T-cell (primary cell): ENCODE measurements at regions of chr22 and their contacts with region 1.

Region 1: GRCh38 chr22:31661851-31662656 is at the start of gene PISD:
- DNase-seq: peak; percentile 92 to 98 (median 96)
- ATAC-seq: peak; percentile 93 to 97 (median 96)
- H3K4me3 ChIP-seq: peak within 1 kb of the TSS; percentile 86 to 99
- H3K4me3 Mint-ChIP-seq: peak within 1 kb of the TSS; percentile 90 to 99 (median 97)
- H3K27ac ChIP-seq: peak within 1 kb of the TSS; percentile 60
- H3K27ac Mint-ChIP-seq: peak within 1 kb of the TSS; percentile 92 to 95
- H3K4me1 ChIP-seq: peaks cover 11 to 28% of the 10 kb centered on the region in 2 experiments
- H3K4me1 Mint-ChIP-seq: peaks cover 37 to 44% (median 38%) of the 10 kb centered on the region in 3 donors
- H3K27me3 ChIP-seq: no peaks in the 10 kb centered on the region
- H3K27me3 Mint-ChIP-seq: no peaks in the 10 kb centered on the region
- total RNA-seq, gene PISD: 35.0 to 44.2 (median 39.3) TPM

Region 2: DNA sequence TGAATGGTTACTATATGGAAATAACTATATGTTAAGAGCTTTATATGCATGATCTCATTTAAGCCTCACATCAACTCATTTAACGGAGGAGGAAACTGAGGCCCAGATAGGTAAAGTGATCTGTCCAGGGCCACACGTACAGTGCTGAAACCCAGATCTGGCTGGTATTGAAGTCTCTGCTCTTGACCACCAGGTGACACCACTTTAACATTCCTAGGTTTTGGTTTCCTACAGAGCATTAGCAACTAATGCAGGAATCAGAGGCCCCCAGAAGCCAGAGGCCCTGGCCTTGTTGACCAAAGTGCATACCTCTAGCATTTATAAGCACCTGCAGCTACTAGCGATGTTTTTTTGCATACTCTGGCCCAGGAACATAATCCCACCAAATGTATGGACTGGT is 462.9 kb before region 1 on chr22:
- CTCF ChIA-PET with region 1: no interaction called
- POLR2A ChIA-PET with region 1: no interaction called
- DNase-seq: peak in 1 of 35 experiments; percentile 18
- ATAC-seq: no peak
- H3K4me3 ChIP-seq: no peak overlapping the region
- H3K4me3 Mint-ChIP-seq: no peak overlapping the region
- H3K27ac ChIP-seq: no peak overlapping the region
- H3K27ac Mint-ChIP-seq: peak overlapping the region in 1 of 2 donors; percentile 7
- H3K4me1 ChIP-seq: no peaks in the 10 kb centered on the region
- H3K4me1 Mint-ChIP-seq: peaks cover 0 to 3% (median 0%) of the 10 kb centered on the region in 3 donors
- H3K27me3 ChIP-seq: no peaks in the 10 kb centered on the region
- H3K27me3 Mint-ChIP-seq: no peaks in the 10 kb centered on the region

Region 3: GRCh38 chr22:31639436-31640039 is 22.5 kb before region 1 on chr22:
- CTCF ChIA-PET with region 1: interaction called, 7 to 12 read pairs
- POLR2A ChIA-PET with region 1: interaction called in 1 of 2 experiments, 10 read pairs
- DNase-seq: peak in 1 of 35 experiments; percentile 12
- ATAC-seq: peak; percentile 35 to 68 (median 53)
- H3K4me3 ChIP-seq: no peak overlapping the region
- H3K4me3 Mint-ChIP-seq: peak overlapping the region in 1 of 3 donors; percentile 3
- H3K27ac ChIP-seq: no peak overlapping the region
- H3K27ac Mint-ChIP-seq: peak overlapping the region; percentile 75 to 86
- H3K4me1 ChIP-seq: peaks cover 0 to 30% of the 10 kb centered on the region in 2 experiments
- H3K4me1 Mint-ChIP-seq: peaks cover 32 to 41% (median 38%) of the 10 kb centered on the region in 3 donors
- H3K27me3 ChIP-seq: no peaks in the 10 kb centered on the region
- H3K27me3 Mint-ChIP-seq: no peaks in the 10 kb centered on the region

Region 4: DNA sequence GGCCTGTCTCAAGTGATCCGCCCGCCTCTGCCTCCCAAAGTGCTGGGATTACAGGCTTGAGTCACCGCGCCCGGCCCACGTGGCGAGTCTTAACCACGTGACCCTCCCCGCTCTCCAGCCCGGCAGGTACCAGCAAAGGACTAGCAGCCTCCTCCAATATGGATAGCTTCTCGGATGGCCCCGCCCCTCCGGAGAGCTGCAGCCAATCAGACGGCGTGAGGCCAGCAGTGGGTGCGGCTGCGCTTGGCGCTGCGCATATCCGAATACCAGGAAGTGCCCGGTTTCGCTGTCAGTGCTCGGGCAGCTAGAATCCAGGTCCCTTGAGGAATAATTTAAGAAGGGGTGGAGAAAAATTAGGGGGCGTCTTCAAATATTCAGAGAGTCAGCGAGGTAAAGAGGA is 14.6 kb after region 1 on chr22:
- CTCF ChIA-PET with region 1: interaction called in 1 of 2 experiments, 16 read pairs
- POLR2A ChIA-PET with region 1: interaction called, 7 to 15 read pairs
- DNase-seq: peak; percentile 84 to 93 (median 89)
- ATAC-seq: peak; percentile 100
- H3K4me3 ChIP-seq: peak overlapping the region; percentile 60 to 65
- H3K4me3 Mint-ChIP-seq: peak overlapping the region; percentile 82 to 94 (median 93)
- H3K27ac ChIP-seq: peak overlapping the region; percentile 75
- H3K27ac Mint-ChIP-seq: peak overlapping the region; percentile 97 to 99
- H3K4me1 ChIP-seq: peaks cover 0 to 11% of the 10 kb centered on the region in 2 experiments
- H3K4me1 Mint-ChIP-seq: peaks cover 10 to 12% (median 11%) of the 10 kb centered on the region in 3 donors
- H3K27me3 ChIP-seq: no peaks in the 10 kb centered on the region
- H3K27me3 Mint-ChIP-seq: no peaks in the 10 kb centered on the region

Region 5: GRCh38 chr22:31947296-31947695 is 285.2 kb after region 1 on chr22:
- CTCF ChIA-PET with region 1: interaction called in 1 of 2 experiments, 17 read pairs
- POLR2A ChIA-PET with region 1: no interaction called
- DNase-seq: peak in 19 of 35 experiments; percentile 14 to 77 (median 34)
- ATAC-seq: peak; percentile 28 to 54 (median 30)
- H3K4me3 ChIP-seq: no peak overlapping the region
- H3K4me3 Mint-ChIP-seq: peak overlapping the region in 1 of 3 donors; percentile 1
- H3K27ac ChIP-seq: peak overlapping the region; percentile 88
- H3K27ac Mint-ChIP-seq: peak overlapping the region; percentile 83 to 84
- H3K4me1 ChIP-seq: peaks cover 6 to 37% of the 10 kb centered on the region in 2 experiments
- H3K4me1 Mint-ChIP-seq: peaks cover 21 to 36% (median 35%) of the 10 kb centered on the region in 3 donors
- H3K27me3 ChIP-seq: no peaks in the 10 kb centered on the region
- H3K27me3 Mint-ChIP-seq: no peaks in the 10 kb centered on the region

Region 6: DNA sequence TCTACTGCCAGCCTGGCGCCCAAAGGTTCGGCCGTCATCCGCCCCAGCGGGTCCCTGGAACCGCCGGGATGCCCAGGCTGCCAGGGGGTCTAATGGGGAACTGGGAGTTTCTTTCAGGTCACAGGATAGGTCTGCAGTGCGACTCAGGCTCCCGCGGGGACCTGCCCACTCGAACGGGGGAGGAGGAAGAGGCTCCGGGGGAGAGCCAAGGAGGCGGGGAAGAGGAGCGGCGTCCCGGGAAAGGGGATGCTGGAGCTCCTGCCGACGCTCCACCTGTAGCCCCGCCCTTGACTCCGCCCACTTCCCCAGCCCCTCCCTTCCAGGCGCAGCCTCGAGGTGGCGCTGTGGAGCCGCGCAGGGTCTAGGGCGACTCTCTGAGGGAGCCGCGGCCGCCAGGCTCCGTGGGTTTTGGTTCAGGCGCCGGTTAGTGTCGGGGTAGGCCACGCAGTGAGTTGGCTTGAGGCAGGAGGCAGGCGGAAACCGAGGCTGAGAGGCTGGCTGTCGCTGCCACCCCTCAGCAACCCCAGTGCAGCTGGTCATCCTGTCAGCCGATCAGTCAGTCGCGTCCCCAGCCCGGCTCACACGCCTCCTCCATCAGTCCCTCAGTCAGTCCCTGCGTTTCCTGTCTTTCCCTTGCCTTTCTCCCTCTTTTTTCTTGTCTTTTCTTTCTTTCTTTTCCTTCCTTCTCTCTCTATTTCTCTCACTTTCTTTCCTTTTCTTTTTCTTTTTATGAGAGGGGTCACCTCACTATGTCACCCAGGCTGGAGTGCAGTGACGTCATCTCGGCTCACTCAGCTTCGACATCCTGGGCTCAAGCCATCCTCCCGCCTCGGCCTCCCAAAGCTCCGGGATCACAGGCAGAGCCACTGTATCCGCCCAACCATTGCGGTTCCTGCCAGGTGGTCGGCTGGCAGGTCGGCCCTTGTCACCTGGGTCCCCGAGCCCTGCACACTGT is 308.7 kb after region 1 on chr22:
- CTCF ChIA-PET with region 1: interaction called in 1 of 2 experiments, 10 read pairs
- POLR2A ChIA-PET with region 1: interaction called in 1 of 2 experiments, 3 read pairs
- DNase-seq: peak; percentile 62 to 93 (median 83)
- ATAC-seq: peak; percentile 94 to 99 (median 94)
- H3K4me3 ChIP-seq: peak overlapping the region; percentile 53 to 54
- H3K4me3 Mint-ChIP-seq: peak overlapping the region; percentile 76 to 86 (median 79)
- H3K27ac ChIP-seq: no peak overlapping the region
- H3K27ac Mint-ChIP-seq: peak overlapping the region in 1 of 2 donors; percentile 28
- H3K4me1 ChIP-seq: peaks cover 4 to 20% of the 10 kb centered on the region in 2 experiments
- H3K4me1 Mint-ChIP-seq: peaks cover 12 to 15% (median 13%) of the 10 kb centered on the region in 3 donors
- H3K27me3 ChIP-seq: peaks cover 0 to 6% of the 10 kb centered on the region in 2 experiments
- H3K27me3 Mint-ChIP-seq: no peaks in the 10 kb centered on the region